A673 (cell line): ENCODE measurements at regions of chr12 and their contacts with region 1.

Region 1: DNA sequence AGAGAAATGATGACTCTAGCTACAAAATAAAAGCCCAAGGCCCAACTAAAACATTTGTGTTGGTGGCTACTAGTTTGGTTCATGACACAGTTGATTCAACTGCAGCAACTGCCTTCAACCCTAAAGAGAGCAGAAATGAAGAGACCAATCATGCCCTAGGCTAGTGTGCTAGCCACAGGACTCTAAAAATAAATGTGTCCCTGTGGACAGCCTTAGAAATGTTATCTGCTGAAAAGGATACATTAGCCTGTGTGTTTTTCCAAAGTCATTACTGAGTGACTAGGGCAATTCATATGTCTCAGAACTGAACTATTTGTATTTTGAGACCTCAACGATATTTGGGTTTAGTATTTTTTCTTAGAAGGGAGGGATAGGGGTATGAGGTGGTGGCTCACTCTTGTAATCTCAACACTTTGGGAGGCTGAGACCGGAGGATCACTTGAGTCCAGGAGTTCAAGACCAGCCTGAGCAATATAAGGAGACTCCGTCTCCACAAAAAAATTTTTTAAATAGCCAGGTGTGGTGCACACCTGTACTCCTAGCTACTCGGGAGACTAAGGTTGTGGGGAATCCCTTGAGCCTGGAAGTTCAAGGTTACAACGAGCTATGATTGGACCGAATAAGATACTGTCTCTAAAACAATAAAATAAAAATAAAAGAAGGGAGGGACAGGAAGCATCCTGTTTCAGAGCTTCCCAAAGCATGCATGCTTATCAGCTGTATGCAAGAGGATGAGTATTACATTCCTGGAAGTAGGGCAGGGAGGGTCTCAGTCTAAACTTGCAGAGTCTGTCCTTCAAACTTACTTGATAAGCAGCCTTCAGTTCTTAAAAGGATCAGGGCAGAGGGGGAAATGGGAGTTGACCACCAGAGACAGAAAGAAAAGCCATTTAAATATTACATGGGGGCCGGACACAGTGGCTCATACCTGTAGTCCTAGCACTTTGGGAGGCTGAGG is 29.6 kb upstream of the NAP1L1 start:
- DNase-seq: no peak
- H3K4me3 ChIP-seq: no peak overlapping the region
- H3K27ac ChIP-seq: no peak overlapping the region
- H3K4me1 ChIP-seq: no peaks in the 10 kb centered on the region
- H3K27me3 ChIP-seq: no peaks in the 10 kb centered on the region
- CTCF ChIP-seq: no peak

Region 2: GRCh38 chr12:76002598-76003354 is 111.3 kb before region 1 on chr12:
- CTCF ChIA-PET with region 1: no interaction called
- POLR2A ChIA-PET with region 1: interaction called, 12 read pairs
- intact Hi-C with region 1: no loop called
- DNase-seq: no peak
- H3K4me3 ChIP-seq: no peak overlapping the region
- H3K27ac ChIP-seq: no peak overlapping the region
- H3K4me1 ChIP-seq: peaks cover 5% of the 10 kb centered on the region
- H3K27me3 ChIP-seq: no peaks in the 10 kb centered on the region
- CTCF ChIP-seq: no peak